GM12878 (cell line): ENCODE measurements at regions of chr10 and their contacts with region 1.

Region 1: GRCh38 chr10:119784340-119785070 is 58.7 kb downstream of the INPP5F start:
- DNase-seq: peak; percentile 54
- ATAC-seq: peak; percentile 91
- H3K4me3 ChIP-seq: no peak overlapping the region
- H3K27ac ChIP-seq: peak overlapping the region; percentile 7; the same call in 1 of the 2 replicates
- H3K4me1 ChIP-seq: peaks cover 14% of the 10 kb centered on the region
- H3K27me3 ChIP-seq: no peaks in the 10 kb centered on the region
- CTCF ChIP-seq: no peak
- EP300 ChIP-seq: peak; percentile 71 to 84; a peak in 3 of 4 replicates
- POLR2A ChIP-seq: no peak
- RAD21 ChIP-seq: no peak

Region 2: DNA sequence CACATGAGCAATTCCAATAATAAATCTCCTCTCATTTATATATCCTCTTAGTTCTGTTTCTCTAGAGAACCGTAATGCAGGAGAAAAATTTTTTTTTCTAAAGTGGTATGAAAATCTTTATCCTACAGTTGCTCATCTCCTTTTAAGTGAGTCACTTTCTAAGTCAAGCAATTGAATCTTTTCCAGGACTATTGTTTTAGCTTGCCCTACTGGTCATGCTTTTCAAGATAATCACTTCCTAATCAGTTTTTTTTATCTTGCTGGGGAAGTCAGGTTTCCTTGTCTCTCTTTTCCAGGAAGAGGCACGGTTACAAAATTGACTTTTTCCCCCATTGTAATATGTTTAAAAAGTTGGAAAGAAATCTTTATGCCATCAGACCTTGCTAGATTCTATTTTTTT is 14.6 kb before region 1 on chr10:
- CTCF ChIA-PET with region 1: interaction called, 17 read pairs
- POLR2A ChIA-PET with region 1: interaction called, 8 read pairs
- RAD21 ChIA-PET with region 1: no interaction called
- SMC1A ChIA-PET with region 1: interaction called, 25 read pairs
- in situ Hi-C with region 1: no loop called
- intact Hi-C with region 1: no loop called
- DNase-seq: no peak
- ATAC-seq: no peak
- H3K4me3 ChIP-seq: no peak overlapping the region
- H3K27ac ChIP-seq: no peak overlapping the region
- H3K4me1 ChIP-seq: no peaks in the 10 kb centered on the region
- H3K27me3 ChIP-seq: no peaks in the 10 kb centered on the region
- CTCF ChIP-seq: no peak
- EP300 ChIP-seq: no peak
- POLR2A ChIP-seq: no peak
- RAD21 ChIP-seq: no peak

Region 3: DNA sequence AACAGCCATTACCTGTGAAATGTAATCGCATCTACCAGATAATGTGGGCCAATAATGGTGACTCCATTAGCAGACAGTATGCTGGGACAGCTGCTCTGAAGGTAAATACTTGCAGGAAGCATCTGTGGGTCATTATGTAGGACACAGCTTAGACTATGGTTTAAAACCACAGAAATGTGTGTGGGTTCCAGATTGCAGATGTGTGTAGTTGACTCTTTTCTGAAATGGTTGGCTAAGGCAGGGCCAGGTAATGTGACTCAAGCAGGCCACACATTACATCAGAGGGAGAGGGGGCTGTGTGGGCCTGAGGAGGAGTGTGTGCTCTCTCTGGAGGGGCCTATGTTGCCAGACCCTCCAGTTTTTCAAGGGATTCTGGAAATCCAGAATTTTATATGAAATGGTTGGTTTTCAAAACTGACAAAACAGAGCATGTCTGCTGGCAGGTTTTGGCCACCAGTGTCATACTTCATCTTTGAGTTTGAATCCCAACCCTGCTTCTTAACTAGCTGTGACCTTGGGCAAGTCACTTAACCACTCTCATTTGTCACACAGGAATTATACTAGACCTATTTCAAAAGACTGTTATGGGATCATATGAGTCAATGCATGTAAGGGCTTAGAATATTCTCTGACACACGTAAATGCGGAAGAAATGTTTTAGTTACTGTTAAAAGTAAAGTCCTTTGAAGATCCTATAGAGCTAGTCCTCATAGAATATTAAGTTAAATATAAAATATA is 23.6 kb after region 1 on chr10:
- CTCF ChIA-PET with region 1: interaction called, 4 read pairs
- POLR2A ChIA-PET with region 1: interaction called, 3 read pairs
- RAD21 ChIA-PET with region 1: interaction called, 6 read pairs
- SMC1A ChIA-PET with region 1: interaction called, 10 read pairs
- in situ Hi-C with region 1: no loop called
- intact Hi-C with region 1: no loop called
- DNase-seq: no peak
- ATAC-seq: peak; percentile 93
- H3K4me3 ChIP-seq: no peak overlapping the region
- H3K27ac ChIP-seq: no peak overlapping the region
- H3K4me1 ChIP-seq: peaks cover 2% of the 10 kb centered on the region; the same call in 1 of the 2 replicates
- H3K27me3 ChIP-seq: no peaks in the 10 kb centered on the region
- CTCF ChIP-seq: no peak
- EP300 ChIP-seq: no peak
- POLR2A ChIP-seq: no peak
- RAD21 ChIP-seq: no peak

Region 4: GRCh38 chr10:120131183-120131582 is 346.7 kb after region 1 on chr10:
- CTCF ChIA-PET with region 1: no interaction called
- POLR2A ChIA-PET with region 1: no interaction called
- RAD21 ChIA-PET with region 1: no interaction called
- SMC1A ChIA-PET with region 1: no interaction called
- in situ Hi-C with region 1: no loop called
- intact Hi-C with region 1: no loop called
- DNase-seq: no peak
- ATAC-seq: no peak
- H3K4me3 ChIP-seq: no peak overlapping the region
- H3K27ac ChIP-seq: no peak overlapping the region
- H3K4me1 ChIP-seq: no peaks in the 10 kb centered on the region
- H3K27me3 ChIP-seq: no peaks in the 10 kb centered on the region
- CTCF ChIP-seq: no peak
- EP300 ChIP-seq: no peak
- POLR2A ChIP-seq: no peak
- RAD21 ChIP-seq: no peak